T-cell (primary cell): ENCODE measurements at regions of chr7 and their contacts with region 1.

Region 1: DNA sequence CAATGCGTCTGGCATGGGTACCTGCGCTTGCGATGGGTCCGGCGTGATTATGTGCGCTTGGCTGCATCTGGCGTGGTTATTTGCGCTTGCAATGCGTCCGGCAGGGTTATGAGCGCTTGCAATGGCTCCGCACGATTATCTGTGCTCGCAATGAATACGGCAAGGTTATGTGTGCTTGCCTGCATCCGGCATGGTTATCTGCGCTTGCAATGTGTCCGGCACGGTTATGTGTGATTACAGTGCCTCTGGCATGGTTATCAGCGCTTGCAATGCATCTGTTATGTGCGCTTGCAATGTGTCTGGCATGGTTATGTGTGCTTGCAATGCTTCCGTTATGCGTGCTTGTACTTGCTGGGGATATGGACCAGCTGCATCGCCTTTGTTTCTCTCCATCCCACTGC is 37.7 kb downstream of the RBAK start:
- DNase-seq: no peak
- ATAC-seq: no peak
- H3K4me3 ChIP-seq: no peak overlapping the region
- H3K4me3 Mint-ChIP-seq: no peak overlapping the region
- H3K27ac ChIP-seq: no peak overlapping the region
- H3K27ac Mint-ChIP-seq: no peak overlapping the region
- H3K4me1 ChIP-seq: peaks cover 0 to 5% of the 10 kb centered on the region in 2 experiments
- H3K4me1 Mint-ChIP-seq: peaks cover 2 to 14% (median 6%) of the 10 kb centered on the region in 3 donors
- H3K27me3 ChIP-seq: peaks cover 0 to 40% of the 10 kb centered on the region in 2 experiments
- H3K27me3 Mint-ChIP-seq: peaks cover 0 to 23% of the 10 kb centered on the region in 2 donors

Region 2: DNA sequence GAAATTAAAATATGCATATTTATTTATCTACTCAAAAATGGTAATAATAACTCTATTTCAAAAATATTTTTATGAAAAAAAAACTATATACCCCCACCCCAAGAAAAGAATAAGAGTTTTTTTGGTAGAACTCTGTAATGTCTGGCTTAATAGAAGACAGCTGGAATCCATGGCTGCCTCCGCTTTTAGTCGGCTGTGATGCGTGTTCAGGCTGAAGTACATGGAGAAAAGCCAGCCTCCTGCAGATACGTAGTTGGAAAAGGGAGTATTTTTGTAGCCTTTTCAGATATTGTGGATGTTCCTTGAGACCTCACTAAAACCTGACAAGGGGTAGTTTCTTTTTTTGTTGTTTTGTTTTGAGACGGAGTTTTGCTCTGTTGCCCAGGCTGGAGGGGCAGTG is 391.3 kb before region 1 on chr7:
- CTCF ChIA-PET with region 1: no interaction called
- POLR2A ChIA-PET with region 1: no interaction called
- DNase-seq: no peak
- ATAC-seq: no peak
- H3K4me3 ChIP-seq: no peak overlapping the region
- H3K4me3 Mint-ChIP-seq: no peak overlapping the region
- H3K27ac ChIP-seq: no peak overlapping the region
- H3K27ac Mint-ChIP-seq: no peak overlapping the region
- H3K4me1 ChIP-seq: peaks cover 16 to 50% of the 10 kb centered on the region in 2 experiments
- H3K4me1 Mint-ChIP-seq: peaks cover 77 to 89% (median 79%) of the 10 kb centered on the region in 3 donors
- H3K27me3 ChIP-seq: no peaks in the 10 kb centered on the region
- H3K27me3 Mint-ChIP-seq: no peaks in the 10 kb centered on the region

Region 3: GRCh38 chr7:4815609-4816418 is 267.5 kb before region 1 on chr7:
- CTCF ChIA-PET with region 1: no interaction called
- POLR2A ChIA-PET with region 1: interaction called in 1 of 2 experiments, 11 read pairs
- DNase-seq: no peak
- ATAC-seq: no peak
- H3K4me3 ChIP-seq: no peak overlapping the region
- H3K4me3 Mint-ChIP-seq: no peak overlapping the region
- H3K27ac ChIP-seq: no peak overlapping the region
- H3K27ac Mint-ChIP-seq: no peak overlapping the region
- H3K4me1 ChIP-seq: peaks cover 0 to 4% of the 10 kb centered on the region in 2 experiments
- H3K4me1 Mint-ChIP-seq: no peaks in the 10 kb centered on the region
- H3K27me3 ChIP-seq: peaks cover 0 to 86% of the 10 kb centered on the region in 2 experiments
- H3K27me3 Mint-ChIP-seq: peaks cover 0 to 37% of the 10 kb centered on the region in 2 donors

Region 4: GRCh38 chr7:4973728-4974198 is 109.5 kb before region 1 on chr7:
- CTCF ChIA-PET with region 1: interaction called, 4 to 13 read pairs
- POLR2A ChIA-PET with region 1: no interaction called
- DNase-seq: peak; percentile 89 to 96 (median 93)
- ATAC-seq: peak; percentile 96 to 98 (median 97)
- H3K4me3 ChIP-seq: peak overlapping the region; percentile 58 to 70
- H3K4me3 Mint-ChIP-seq: peak overlapping the region; percentile 91 to 96 (median 94)
- H3K27ac ChIP-seq: peak overlapping the region; percentile 63
- H3K27ac Mint-ChIP-seq: peak overlapping the region; percentile 96 to 97
- H3K4me1 ChIP-seq: peaks cover 0 to 23% of the 10 kb centered on the region in 2 experiments
- H3K4me1 Mint-ChIP-seq: peaks cover 32 to 39% (median 33%) of the 10 kb centered on the region in 3 donors
- H3K27me3 ChIP-seq: no peaks in the 10 kb centered on the region
- H3K27me3 Mint-ChIP-seq: no peaks in the 10 kb centered on the region

Region 5: GRCh38 chr7:5045558-5046396 is 37.5 kb before region 1 on chr7 and contains the start of gene RBAK:
- CTCF ChIA-PET with region 1: no interaction called
- POLR2A ChIA-PET with region 1: no interaction called
- DNase-seq: peak; percentile 72 to 95 (median 85)
- ATAC-seq: peak; percentile 99 to 100 (median 100)
- H3K4me3 ChIP-seq: peak within 1 kb of the TSS; percentile 75 to 76
- H3K4me3 Mint-ChIP-seq: peak within 1 kb of the TSS; percentile 91 to 93 (median 92)
- H3K27ac ChIP-seq: peak within 1 kb of the TSS; percentile 59
- H3K27ac Mint-ChIP-seq: peak within 1 kb of the TSS; percentile 88
- H3K4me1 ChIP-seq: peaks cover 4 to 25% of the 10 kb centered on the region in 2 experiments
- H3K4me1 Mint-ChIP-seq: peaks cover 43 to 51% (median 43%) of the 10 kb centered on the region in 3 donors
- H3K27me3 ChIP-seq: no peaks in the 10 kb centered on the region
- H3K27me3 Mint-ChIP-seq: no peaks in the 10 kb centered on the region
- total RNA-seq, gene RBAK: 14.8 to 21.4 (median 17.4) TPM

Region 6: DNA sequence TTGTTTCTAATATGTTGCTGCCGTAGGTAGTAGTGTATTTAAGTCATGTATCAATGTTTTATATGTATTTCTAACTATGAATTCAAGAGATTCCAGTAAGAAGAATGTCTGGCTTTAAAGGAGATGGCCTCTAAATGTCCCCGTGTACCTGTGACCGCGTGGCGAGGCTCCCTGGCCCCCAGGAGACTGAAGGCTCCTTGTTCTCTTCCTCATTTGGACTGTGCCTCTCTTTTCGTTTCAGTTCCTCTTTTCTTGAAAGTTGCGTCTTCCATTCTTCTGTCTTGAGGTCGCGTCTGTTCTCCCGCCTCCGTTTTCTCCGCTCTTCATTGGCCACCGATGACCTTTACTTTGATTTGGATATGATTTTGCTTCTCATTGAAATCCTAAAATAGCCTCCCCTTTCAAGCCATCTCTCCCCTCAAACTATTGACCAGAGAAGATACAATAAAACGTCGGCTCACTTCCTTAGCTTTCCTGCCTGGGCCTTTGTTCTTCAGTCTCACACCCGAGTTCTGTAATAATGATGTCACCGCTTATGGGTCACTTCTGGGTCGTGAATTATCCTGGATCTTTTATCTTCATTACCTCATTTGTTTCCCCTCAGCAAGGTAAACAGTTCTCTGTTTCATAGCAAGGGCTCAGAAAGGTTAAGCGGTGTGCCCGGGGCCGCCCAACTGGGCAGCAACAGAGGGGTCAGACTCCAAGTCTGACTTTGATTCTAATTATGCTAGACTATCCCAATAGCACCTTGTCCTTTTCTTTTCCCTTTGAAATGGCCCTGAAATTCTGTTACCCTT is 135.5 kb after region 1 on chr7:
- CTCF ChIA-PET with region 1: no interaction called
- POLR2A ChIA-PET with region 1: interaction called in 1 of 2 experiments, 10 read pairs
- DNase-seq: peak in 1 of 35 experiments; percentile 22
- ATAC-seq: peak in 1 of 4 experiments; percentile 12
- H3K4me3 ChIP-seq: no peak overlapping the region
- H3K4me3 Mint-ChIP-seq: no peak overlapping the region
- H3K27ac ChIP-seq: no peak overlapping the region
- H3K27ac Mint-ChIP-seq: peak overlapping the region; percentile 6 to 25
- H3K4me1 ChIP-seq: no peaks in the 10 kb centered on the region
- H3K4me1 Mint-ChIP-seq: peaks cover 0 to 6% (median 0%) of the 10 kb centered on the region in 3 donors
- H3K27me3 ChIP-seq: no peaks in the 10 kb centered on the region
- H3K27me3 Mint-ChIP-seq: no peaks in the 10 kb centered on the region

Region 7: DNA sequence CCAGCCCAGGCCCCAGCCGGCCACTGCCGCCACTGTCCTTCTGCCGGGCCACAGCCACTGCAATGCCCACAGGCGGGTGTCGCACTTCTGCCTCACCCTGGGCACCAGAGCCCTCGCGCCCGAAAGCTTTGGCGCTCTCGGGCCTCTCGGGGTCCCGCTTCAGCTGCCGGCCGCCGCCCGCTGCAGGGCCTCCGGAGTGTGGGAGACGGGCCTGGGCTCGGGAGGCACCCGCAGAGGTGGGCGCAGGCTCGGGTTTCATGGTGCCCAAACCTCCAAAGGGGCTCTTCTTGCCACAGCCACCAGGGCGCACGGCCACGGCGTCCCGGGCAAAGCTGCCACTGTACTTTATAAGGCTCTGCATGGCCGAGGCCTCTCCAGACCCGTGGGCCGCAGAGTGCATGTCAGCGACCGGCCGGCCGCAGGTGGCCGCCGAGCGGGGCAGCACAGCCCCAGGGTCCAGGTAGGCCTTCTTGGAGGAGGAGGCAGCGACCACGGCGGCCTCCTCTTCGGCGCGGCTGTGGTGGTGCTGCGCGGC is 304.5 kb after region 1 on chr7:
- CTCF ChIA-PET with region 1: no interaction called
- POLR2A ChIA-PET with region 1: no interaction called
- DNase-seq: no peak
- ATAC-seq: no peak
- H3K4me3 ChIP-seq: no peak overlapping the region
- H3K4me3 Mint-ChIP-seq: no peak overlapping the region
- H3K27ac ChIP-seq: no peak overlapping the region
- H3K27ac Mint-ChIP-seq: no peak overlapping the region
- H3K4me1 ChIP-seq: peaks cover 0 to 37% of the 10 kb centered on the region in 2 experiments
- H3K4me1 Mint-ChIP-seq: peaks cover 13 to 31% (median 25%) of the 10 kb centered on the region in 3 donors
- H3K27me3 ChIP-seq: no peaks in the 10 kb centered on the region
- H3K27me3 Mint-ChIP-seq: no peaks in the 10 kb centered on the region